Right cardiac atrium (tissue), 5 donors: ENCODE measurements at regions of chr7 and their contacts with region 1.

Region 1: DNA sequence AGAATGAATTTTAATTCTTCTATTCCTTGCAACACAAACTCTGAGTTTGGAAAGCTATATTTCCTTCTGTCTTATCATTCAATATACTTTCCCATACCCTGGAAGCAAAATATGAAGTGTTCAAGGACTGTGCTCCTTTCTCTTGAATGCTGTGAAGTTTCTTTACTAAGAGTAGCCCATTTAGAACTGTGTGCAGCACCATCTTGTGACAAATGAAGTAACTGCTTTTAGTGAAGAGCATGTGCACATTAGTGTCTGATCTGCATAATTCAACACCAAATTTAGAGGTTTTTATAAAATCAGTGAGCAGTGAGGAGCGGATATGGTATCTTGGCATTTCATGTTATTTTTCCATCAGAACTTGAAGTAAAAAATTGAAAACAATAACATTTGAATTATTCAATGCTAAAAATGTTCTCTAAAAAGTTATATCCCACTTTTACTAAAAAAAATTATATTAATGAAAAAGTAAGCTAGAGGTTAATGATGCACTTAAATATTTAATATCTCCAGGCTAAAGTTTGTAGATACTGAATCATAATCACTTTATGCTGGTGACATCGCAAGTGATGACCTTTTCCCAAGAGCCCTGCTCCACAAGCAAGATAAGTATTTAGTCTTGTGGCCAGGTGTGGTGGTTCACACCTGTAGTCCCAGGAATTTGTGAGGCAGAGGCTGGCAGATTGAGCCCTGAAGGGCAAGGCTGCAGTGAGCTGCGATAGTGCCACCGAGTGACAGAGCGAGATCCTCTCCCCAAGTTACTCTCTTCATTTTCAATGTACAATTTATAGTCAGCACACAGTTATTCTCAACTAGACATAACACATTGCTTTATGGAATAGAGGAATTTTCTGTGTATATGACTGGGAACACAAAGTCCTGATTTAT is 108.8 kb upstream of the PCLO start:
- DNase-seq: no peak
- ATAC-seq: peak in 1 of 2 donors; percentile 52
- H3K4me3 ChIP-seq: no peak overlapping the region
- H3K27ac ChIP-seq: no peak overlapping the region
- H3K4me1 ChIP-seq: no peaks in the 10 kb centered on the region
- H3K27me3 ChIP-seq: no peaks in the 10 kb centered on the region

Region 2: DNA sequence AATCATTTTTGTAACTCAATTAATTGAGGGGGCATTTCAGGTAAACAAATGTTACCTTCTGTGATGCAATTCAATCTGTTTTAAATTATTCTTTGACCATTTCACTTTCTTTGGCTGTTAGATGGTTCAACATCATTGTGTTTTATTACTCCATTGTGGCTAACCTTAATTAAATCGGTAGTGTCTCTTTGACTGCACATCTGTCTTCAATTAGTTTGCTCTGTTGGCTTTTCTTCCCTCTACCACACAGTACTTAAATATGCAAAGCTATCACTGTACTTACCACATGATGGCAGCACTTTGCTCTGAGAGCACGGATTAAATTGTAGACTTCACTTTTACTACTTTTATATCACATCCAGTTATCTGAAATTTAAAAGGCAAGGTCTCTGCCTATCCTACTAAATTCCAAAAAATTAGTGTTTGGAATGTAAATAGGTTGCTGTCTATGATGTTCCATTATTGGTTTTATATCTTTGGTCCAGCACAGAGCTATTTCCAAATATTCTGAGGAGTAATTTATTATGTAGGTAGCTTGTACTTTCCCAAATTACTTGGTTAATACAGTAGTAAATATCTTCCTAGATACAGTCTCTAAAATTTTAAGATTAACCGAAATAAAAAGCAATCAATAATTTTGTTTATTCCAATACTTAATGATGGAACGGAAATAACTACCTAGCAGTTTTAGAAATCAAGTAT is 460.7 kb before region 1 on chr7:
- intact Hi-C with region 1: loop called in 3 of 4 experiments (anchors 5 to 10 kb)
- DNase-seq: no peak
- ATAC-seq: peak; percentile 45 to 54
- H3K4me3 ChIP-seq: no peak overlapping the region
- H3K27ac ChIP-seq: no peak overlapping the region
- H3K4me1 ChIP-seq: no peaks in the 10 kb centered on the region
- H3K27me3 ChIP-seq: no peaks in the 10 kb centered on the region

Region 3: DNA sequence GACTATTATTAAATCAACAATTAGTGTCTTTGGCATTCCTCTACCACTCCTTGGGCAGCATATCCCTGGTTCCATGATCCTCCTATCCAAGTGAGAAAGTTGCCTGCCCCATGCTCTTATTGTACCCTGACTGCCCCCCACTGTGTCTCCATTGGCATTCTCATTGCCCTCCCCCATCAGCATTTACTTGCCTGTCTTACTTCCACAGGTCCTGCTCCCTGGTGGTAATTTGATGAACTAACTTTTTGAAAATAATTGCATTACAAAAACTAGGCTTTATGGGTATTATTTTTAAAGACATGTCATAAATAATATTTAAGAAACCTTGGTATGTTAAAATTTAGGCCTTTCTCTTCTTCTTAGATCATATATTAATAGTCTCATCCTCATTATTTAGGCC is 455.2 kb before region 1 on chr7:
- intact Hi-C with region 1: loop called in 3 of 4 experiments (anchors 5 to 10 kb)
- DNase-seq: no peak
- ATAC-seq: no peak
- H3K4me3 ChIP-seq: no peak overlapping the region
- H3K27ac ChIP-seq: no peak overlapping the region
- H3K4me1 ChIP-seq: no peaks in the 10 kb centered on the region
- H3K27me3 ChIP-seq: no peaks in the 10 kb centered on the region